ENCODE measurements at regions of chr12 and their contacts with region 1.

Region 1: DNA sequence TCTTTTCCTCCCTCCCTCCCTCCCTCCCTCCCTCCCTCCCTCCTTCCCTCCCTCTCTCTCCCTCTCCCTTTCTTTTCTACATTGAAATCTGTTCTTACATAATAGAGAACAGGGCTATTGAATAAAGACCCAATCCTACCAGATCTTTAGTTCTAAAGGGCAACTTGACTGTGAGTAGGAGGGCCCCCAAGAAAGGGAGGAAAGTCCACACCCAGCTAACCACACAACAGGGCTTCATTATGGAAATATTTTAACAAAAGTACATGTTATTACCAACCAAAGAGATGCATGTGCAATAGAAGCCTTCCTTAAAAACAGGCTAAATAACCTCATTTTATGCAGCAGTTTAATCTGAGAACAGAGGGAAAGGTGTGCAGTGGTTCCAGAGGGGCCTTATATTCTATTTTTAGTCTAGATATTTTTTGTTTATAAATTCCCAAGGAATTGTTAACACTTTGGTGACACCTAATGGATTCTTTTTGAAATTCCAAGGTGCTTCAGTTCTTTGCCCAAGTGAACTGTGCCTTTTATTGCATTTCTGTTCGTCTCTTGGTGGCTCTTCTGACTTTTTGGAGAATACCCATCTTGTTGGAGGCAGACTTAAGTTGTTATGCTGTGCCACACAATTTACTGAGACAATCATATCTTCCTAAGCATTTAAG is 63.0 kb downstream of the GNS start:
- DNase-seq: peak; percentile 62
- H3K4me3 ChIP-seq: no peak overlapping the region
- H3K27ac ChIP-seq: no peak overlapping the region
- H3K4me1 ChIP-seq: no peaks in the 10 kb centered on the region
- H3K27me3 ChIP-seq: no peaks in the 10 kb centered on the region
- CTCF ChIP-seq: peak; percentile 6 to 16
- POLR2A ChIP-seq: no peak

Region 2: DNA sequence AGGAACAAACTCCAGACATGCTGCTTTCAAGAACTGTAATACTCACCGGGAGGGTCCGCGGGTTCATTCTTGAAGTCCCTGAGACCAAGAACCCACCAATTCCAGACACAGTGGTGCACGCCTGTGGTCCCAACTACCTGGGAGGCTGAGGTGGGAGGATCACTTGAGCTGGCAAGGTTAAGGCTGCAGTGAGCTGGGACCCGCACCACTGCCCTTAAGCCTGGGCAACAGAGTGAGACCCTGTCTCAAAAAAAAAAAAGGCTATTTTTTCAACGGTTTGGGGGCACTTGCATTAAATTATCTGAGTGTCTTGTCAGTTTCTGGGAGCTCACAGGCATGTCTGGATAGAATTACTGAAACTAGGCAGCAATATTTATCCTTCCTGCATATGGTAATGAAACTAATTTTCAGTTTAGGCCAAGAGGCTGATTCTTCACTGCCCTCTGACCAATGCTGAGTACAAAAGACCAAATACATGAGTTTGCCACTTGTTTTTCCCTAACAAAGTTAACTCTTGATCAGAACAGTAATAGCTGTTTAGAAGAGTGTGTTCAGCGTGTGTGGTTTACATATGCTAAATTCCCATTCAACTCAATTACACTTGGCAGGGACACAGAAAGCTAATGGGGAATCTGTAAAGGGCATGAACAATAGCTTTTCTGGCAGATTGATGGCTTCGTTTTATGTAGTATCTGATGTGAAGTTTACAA is 151.7 kb before region 1 on chr12:
- CTCF ChIA-PET with region 1: interaction called, 217 read pairs
- POLR2A ChIA-PET with region 1: interaction called, 3 read pairs
- dilution Hi-C with region 1: no loop called
- intact Hi-C with region 1: loop called (anchors 1 kb)
- DNase-seq: no peak
- H3K4me3 ChIP-seq: no peak overlapping the region
- H3K27ac ChIP-seq: no peak overlapping the region
- H3K4me1 ChIP-seq: no peaks in the 10 kb centered on the region
- H3K27me3 ChIP-seq: peaks cover 3 to 4% of the 10 kb centered on the region in 2 experiments
- CTCF ChIP-seq: no peak
- POLR2A ChIP-seq: no peak

Region 3: DNA sequence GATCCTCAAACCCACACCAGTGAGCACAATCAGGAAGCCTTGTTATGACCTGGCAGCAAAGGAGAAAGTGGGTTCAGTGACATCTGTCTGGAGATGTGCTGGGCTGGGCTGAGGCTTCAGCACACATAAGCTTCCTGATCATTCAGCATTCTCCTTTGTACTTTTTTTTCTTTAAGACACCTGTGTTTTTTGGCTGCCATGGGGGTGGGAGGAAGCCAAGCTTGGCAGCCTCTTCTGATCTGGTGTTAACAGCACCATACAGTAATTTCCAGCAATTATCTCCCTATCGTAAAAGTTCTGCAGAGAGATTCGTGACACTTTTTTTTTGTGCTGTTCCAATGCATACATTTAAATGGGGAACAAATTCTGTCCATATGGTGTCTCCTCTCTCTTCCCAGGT is 124.8 kb before region 1 on chr12:
- CTCF ChIA-PET with region 1: interaction called, 23 read pairs
- POLR2A ChIA-PET with region 1: no interaction called
- dilution Hi-C with region 1: no loop called
- intact Hi-C with region 1: no loop called
- DNase-seq: no peak
- H3K4me3 ChIP-seq: no peak overlapping the region
- H3K27ac ChIP-seq: no peak overlapping the region
- H3K4me1 ChIP-seq: no peaks in the 10 kb centered on the region
- H3K27me3 ChIP-seq: peaks cover 0 to 2% of the 10 kb centered on the region in 2 experiments
- CTCF ChIP-seq: no peak
- POLR2A ChIP-seq: no peak

Region 4: DNA sequence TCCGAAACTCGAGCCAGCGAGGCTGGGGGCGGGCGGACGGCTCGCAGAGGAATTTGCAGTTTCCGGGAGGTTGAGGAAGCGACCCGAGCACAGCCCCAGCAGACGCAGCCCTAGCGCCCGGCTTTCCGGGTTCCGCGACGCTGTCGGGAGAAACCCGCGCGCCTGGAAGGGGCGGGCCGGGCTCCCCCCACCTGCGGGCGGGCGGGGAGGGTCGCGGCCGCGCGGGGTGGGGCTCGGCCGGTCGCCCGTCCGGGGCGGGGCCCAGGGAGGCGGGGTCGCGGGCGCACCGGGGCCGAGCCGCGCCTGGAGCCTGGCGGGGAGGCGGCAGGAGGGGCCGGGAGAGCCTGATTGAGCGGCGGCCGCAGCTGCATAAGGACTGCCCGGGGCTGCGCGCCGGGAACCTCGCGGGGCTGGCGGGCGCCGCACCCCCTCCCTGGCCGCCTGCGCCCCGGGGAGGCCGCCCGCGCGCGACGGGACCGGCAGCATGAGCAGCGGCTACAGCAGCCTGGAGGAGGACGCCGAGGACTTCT is 86.0 kb before region 1 on chr12 and contains the start of gene RASSF3:
- CTCF ChIA-PET with region 1: interaction called, 72 read pairs
- POLR2A ChIA-PET with region 1: no interaction called
- dilution Hi-C with region 1: no loop called
- intact Hi-C with region 1: loop called (anchors 1 kb)
- DNase-seq: peak; percentile 79
- H3K4me3 ChIP-seq: peak within 1 kb of the TSS; percentile 85 to 92 (median 90)
- H3K27ac ChIP-seq: peak within 1 kb of the TSS; percentile 78
- H3K4me1 ChIP-seq: peaks cover 23% of the 10 kb centered on the region
- H3K27me3 ChIP-seq: no peaks in the 10 kb centered on the region
- CTCF ChIP-seq: no peak
- POLR2A ChIP-seq: peak; percentile 63
- total RNA-seq, gene RASSF3: 60.0 and 60.8 TPM in 2 replicates

Region 5: GRCh38 chr12:64625243-64626077 is 70.8 kb before region 1 on chr12:
- CTCF ChIA-PET with region 1: interaction called, 16 read pairs
- POLR2A ChIA-PET with region 1: no interaction called
- dilution Hi-C with region 1: no loop called
- intact Hi-C with region 1: no loop called
- DNase-seq: peak; percentile 96
- H3K4me3 ChIP-seq: peak overlapping the region in 2 of 3 experiments; percentile 11 to 39
- H3K27ac ChIP-seq: peak overlapping the region; percentile 89
- H3K4me1 ChIP-seq: peaks cover 65% of the 10 kb centered on the region
- H3K27me3 ChIP-seq: no peaks in the 10 kb centered on the region
- CTCF ChIP-seq: no peak
- POLR2A ChIP-seq: peak; percentile 36

Measured in endothelial cell of umbilical vein (primary cell).